Activated CD4-positive, alpha-beta T cell treated with anti-CD3 and anti-CD28 coated beads, Interleukin-2, amount 10 ng/mL, durations not matched to agents 24 days and 14 days (primary cell): ENCODE measurements at regions of chr7 and their contacts with region 1.

Region 1: GRCh38 chr7:140175221-140176121 is 1.3 kb downstream of the KDM7A start:
- DNase-seq: peak; percentile 97
- H3K4me3 Mint-ChIP-seq: peak overlapping the region; percentile 88
- H3K27ac Mint-ChIP-seq: peak overlapping the region; percentile 83
- H3K4me1 Mint-ChIP-seq: peaks cover 39% of the 10 kb centered on the region
- H3K27me3 Mint-ChIP-seq: peaks cover 4% of the 10 kb centered on the region

Region 2: DNA sequence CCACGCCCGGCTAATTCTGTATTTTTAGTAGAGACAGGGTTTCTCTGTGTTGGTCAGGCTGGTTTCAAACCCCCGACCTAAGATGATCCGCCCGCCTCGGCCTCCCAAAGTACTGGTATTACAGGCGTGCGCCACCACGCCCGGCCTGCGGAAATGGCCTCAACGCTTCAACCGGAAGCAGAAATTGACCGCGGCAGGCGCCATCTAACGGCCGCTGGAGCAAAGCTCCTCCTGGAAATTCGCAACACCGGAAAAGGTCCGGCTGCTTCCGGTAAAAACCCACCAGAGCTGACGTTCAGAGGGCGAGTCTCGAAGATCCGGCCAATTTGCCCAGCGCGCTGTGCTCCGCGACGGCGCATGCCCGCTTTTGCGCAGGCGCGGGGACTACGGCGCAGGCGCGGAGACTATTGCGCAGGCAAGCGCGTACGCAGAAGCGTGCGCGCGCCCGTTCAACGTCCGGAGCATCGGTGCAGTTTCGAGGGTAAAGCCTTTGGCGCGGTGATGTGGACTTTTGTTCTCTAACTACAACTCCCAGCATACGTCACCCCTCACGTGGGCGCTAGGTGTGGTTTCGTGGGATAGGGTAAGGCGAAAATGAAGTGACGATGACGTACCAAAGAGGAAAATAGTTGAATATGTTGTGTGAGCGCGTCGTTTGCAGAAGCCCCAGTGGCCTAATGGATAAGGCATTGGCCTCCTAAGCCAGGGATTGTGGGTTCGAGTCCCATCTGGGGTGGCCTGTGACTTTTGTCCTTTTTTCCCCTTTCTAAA is 835.2 kb before region 1 on chr7:
- intact Hi-C with region 1: loop called (anchors 5 kb)
- DNase-seq: peak; percentile 99
- H3K4me3 Mint-ChIP-seq: peak overlapping the region; percentile 91
- H3K27ac Mint-ChIP-seq: peak overlapping the region; percentile 93
- H3K4me1 Mint-ChIP-seq: peaks cover 19% of the 10 kb centered on the region
- H3K27me3 Mint-ChIP-seq: peaks cover 4% of the 10 kb centered on the region

Region 3: GRCh38 chr7:140062528-140063299 is 112.8 kb before region 1 on chr7 and contains the start of gene PARP12:
- intact Hi-C with region 1: loop called (anchors 1 kb)
- DNase-seq: peak; percentile 97
- H3K4me3 Mint-ChIP-seq: peak within 1 kb of the TSS; percentile 83
- H3K27ac Mint-ChIP-seq: peak within 1 kb of the TSS; percentile 94
- H3K4me1 Mint-ChIP-seq: peaks cover 48% of the 10 kb centered on the region
- H3K27me3 Mint-ChIP-seq: peaks cover 2% of the 10 kb centered on the region
- total RNA-seq, gene PARP12: 53.3 and 55.9 TPM in 2 replicates

Region 4: GRCh38 chr7:140126435-140127034 is 48.9 kb before region 1 on chr7:
- intact Hi-C with region 1: no loop called
- DNase-seq: no peak
- H3K4me3 Mint-ChIP-seq: peak overlapping the region; percentile 0
- H3K27ac Mint-ChIP-seq: peak overlapping the region; percentile 81
- H3K4me1 Mint-ChIP-seq: peaks cover 22% of the 10 kb centered on the region
- H3K27me3 Mint-ChIP-seq: no peaks in the 10 kb centered on the region

Region 5: GRCh38 chr7:140230861-140231770 is 55.6 kb after region 1 on chr7:
- intact Hi-C with region 1: loop called (anchors 1 kb)
- DNase-seq: peak; percentile 86
- H3K4me3 Mint-ChIP-seq: peak overlapping the region; percentile 96
- H3K27ac Mint-ChIP-seq: peak overlapping the region; percentile 98
- H3K4me1 Mint-ChIP-seq: peaks cover 33% of the 10 kb centered on the region
- H3K27me3 Mint-ChIP-seq: no peaks in the 10 kb centered on the region

Region 6: GRCh38 chr7:140260352-140261104 is 85.1 kb after region 1 on chr7:
- intact Hi-C with region 1: loop called (anchors 1 kb)
- DNase-seq: no peak
- H3K4me3 Mint-ChIP-seq: no peak overlapping the region
- H3K27ac Mint-ChIP-seq: no peak overlapping the region
- H3K4me1 Mint-ChIP-seq: peaks cover 38% of the 10 kb centered on the region
- H3K27me3 Mint-ChIP-seq: peaks cover 4% of the 10 kb centered on the region

Region 7: DNA sequence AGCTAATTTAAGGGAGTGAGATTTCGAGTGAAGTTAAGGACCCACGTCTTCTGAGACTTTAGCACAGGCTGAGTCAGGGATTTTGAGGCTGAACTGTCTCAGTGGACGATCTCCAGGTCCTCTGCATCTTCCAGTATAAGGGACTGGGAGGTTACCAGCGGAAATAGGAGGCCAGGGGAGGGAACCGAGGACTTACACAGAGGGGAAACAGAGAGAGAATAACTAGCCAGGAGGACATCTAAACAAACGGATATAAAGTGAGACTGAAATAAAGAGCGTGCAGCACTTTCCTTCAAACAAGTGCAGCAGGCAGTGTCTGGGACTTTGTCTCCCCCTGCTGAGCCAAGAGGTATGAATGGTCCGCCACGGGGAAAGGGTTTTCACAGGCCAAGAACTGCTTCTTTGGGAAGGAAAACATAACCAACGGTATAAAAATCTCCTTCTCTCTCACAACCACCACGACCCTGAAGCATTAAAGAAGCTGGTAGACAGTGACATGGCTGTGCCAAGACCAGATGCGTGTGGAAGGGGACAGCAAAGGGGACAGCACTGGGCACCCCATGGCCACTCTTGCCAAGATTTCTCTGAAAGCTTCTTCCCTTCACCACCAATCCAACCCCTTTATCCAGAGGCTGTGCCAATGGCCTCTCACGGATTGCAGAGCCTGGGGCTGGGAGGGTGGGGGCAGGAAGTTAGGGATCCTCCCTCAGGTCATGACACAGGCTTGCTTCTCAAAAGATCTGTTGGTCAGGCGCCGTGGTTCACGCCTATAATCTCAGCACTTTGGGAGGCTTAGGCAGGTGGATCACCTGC is 150.9 kb after region 1 on chr7:
- intact Hi-C with region 1: loop called (anchors 1 kb)
- DNase-seq: peak; percentile 87
- H3K4me3 Mint-ChIP-seq: no peak overlapping the region
- H3K27ac Mint-ChIP-seq: no peak overlapping the region
- H3K4me1 Mint-ChIP-seq: no peaks in the 10 kb centered on the region
- H3K27me3 Mint-ChIP-seq: no peaks in the 10 kb centered on the region

Region 8: GRCh38 chr7:140403878-140404564 is 228.6 kb after region 1 on chr7 and contains the start of gene RAB19:
- intact Hi-C with region 1: loop called (anchors 2 kb)
- DNase-seq: peak; percentile 88
- H3K4me3 Mint-ChIP-seq: peak within 1 kb of the TSS; percentile 90
- H3K27ac Mint-ChIP-seq: peak within 1 kb of the TSS; percentile 97
- H3K4me1 Mint-ChIP-seq: peaks cover 34% of the 10 kb centered on the region
- H3K27me3 Mint-ChIP-seq: no peaks in the 10 kb centered on the region
- total RNA-seq, gene RAB19: 23.0 and 24.4 TPM in 2 replicates